ENCODE measurements at regions of chr2 and their contacts with region 1.

Region 1: DNA sequence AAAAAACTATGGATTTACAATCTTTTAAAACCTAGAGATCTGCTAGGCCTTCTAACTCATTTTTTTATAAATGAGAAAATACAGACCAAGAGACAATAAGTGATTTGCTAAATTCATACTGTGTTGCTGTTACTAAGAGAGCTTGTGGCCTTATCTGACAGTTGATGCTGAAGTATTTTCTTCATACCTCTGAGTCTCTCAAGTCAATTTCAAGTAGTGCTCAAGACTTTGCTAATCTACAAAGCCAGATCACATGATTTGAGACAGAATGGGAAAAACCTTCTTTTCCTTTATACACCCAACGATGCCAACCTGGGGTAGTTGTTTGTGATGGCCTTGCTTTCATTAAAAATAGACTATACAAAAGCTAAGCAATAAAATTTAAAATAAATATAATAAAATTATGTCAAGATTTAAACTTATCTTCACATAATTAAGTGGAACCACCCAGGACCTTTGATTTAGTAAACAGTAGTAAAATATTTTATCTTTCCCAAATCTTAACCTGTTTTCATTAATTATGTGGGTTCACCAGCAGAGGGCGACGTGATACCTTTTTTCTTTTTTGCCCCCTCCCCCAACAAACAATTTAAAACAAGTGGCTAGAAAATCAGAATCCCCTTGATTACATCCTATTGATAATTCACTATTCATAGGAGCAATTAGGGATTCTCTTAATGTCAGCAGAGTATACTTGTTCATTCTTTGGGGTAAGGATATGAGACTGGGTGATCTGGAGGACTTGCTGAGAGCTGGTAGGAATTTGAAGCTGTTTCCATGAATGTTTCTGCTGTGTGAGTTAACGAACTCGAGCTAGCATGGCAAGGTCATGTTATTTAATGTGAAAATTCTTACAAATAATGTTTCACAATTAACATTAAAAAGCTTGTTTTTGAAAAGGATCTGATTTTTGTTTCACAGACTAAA is 49.6 kb upstream of the SLC5A7 start:
- DNase-seq: peak; percentile 34
- ATAC-seq: no peak
- H3K4me3 Mint-ChIP-seq: no peak overlapping the region
- H3K27ac Mint-ChIP-seq: no peak overlapping the region
- H3K4me1 Mint-ChIP-seq: no peaks in the 10 kb centered on the region
- H3K27me3 Mint-ChIP-seq: peaks cover 2% of the 10 kb centered on the region

Region 2: DNA sequence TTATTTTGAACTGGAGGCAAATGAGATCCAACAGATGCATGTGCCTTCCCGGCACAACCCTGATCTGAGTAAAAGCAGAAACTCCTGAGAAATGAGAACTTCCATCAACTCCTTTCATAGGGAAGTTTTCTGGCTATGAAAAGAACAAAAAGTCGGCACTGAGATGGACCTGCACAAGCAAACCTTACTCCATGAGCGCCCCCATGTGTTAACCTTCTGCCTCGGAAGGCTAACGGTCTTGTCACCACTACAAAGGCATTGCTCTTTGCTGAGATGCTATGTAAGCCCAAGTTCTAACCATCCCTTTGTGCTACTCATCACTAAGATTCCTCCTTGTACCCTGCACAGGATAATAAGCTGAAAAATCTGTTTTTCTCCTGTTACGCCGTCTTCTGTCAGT is 245.8 kb after region 1 on chr2:
- CTCF ChIA-PET with region 1: interaction called, 3 read pairs
- POLR2A ChIA-PET with region 1: no interaction called
- intact Hi-C with region 1: loop called in 1 of 2 experiments (anchors 1 kb)
- DNase-seq: peak; percentile 22
- ATAC-seq: no peak
- H3K4me3 Mint-ChIP-seq: no peak overlapping the region
- H3K27ac Mint-ChIP-seq: no peak overlapping the region
- H3K4me1 Mint-ChIP-seq: no peaks in the 10 kb centered on the region
- H3K27me3 Mint-ChIP-seq: peaks cover 5% of the 10 kb centered on the region

Measured in activated CD4-positive, alpha-beta T cell treated with anti-CD3 and anti-CD28 coated beads for 36 hours (primary cell).